B cell (primary cell): ENCODE measurements at regions of chr2 and their contacts with region 1.

Region 1: DNA sequence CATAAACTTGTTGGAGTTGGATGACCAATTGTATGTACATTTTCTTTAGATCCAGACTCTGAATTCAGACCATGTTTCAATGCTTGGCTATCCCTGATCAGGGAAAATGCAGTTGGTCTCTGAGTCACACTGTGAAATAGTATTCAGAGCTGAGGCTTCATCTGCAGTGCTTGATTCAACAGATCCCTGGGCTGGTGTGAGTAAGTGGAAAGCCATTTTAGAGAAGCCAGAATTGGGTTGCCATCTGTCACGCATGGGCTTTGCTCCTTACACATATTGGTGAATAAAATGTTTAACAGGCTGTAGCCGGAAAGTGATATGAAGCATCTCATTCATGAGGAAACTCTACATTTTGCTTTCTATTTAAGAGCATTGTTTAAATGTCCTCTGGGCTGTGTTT is 50.0 kb upstream of the ACYP2 start:
- DNase-seq: no peak
- ATAC-seq: no peak
- H3K4me3 ChIP-seq: no peak overlapping the region
- H3K4me3 Mint-ChIP-seq: no peak overlapping the region
- H3K27ac ChIP-seq: no peak overlapping the region
- H3K27ac Mint-ChIP-seq: no peak overlapping the region
- H3K4me1 ChIP-seq: peaks cover 3 to 4% of the 10 kb centered on the region in 2 donors
- H3K4me1 Mint-ChIP-seq: peaks cover 12% of the 10 kb centered on the region
- H3K27me3 ChIP-seq: no peaks in the 10 kb centered on the region
- H3K27me3 Mint-ChIP-seq: no peaks in the 10 kb centered on the region
- CTCF ChIP-seq: no peak

Region 2: GRCh38 chr2:53941749-53942148 is 123.7 kb before region 1 on chr2:
- CTCF ChIA-PET with region 1: no interaction called
- POLR2A ChIA-PET with region 1: no interaction called
- intact Hi-C with region 1: no loop called
- DNase-seq: peak; percentile 35
- ATAC-seq: peak; percentile 28
- H3K4me3 ChIP-seq: peak overlapping the region in 1 of 5 experiments; percentile 39
- H3K4me3 Mint-ChIP-seq: no peak overlapping the region
- H3K27ac ChIP-seq: peak overlapping the region; percentile 29 to 40
- H3K27ac Mint-ChIP-seq: peak overlapping the region; percentile 56
- H3K4me1 ChIP-seq: peaks cover 38 to 55% of the 10 kb centered on the region in 2 donors
- H3K4me1 Mint-ChIP-seq: peaks cover 48% of the 10 kb centered on the region
- H3K27me3 ChIP-seq: no peaks in the 10 kb centered on the region
- H3K27me3 Mint-ChIP-seq: no peaks in the 10 kb centered on the region
- CTCF ChIP-seq: no peak

Region 3: DNA sequence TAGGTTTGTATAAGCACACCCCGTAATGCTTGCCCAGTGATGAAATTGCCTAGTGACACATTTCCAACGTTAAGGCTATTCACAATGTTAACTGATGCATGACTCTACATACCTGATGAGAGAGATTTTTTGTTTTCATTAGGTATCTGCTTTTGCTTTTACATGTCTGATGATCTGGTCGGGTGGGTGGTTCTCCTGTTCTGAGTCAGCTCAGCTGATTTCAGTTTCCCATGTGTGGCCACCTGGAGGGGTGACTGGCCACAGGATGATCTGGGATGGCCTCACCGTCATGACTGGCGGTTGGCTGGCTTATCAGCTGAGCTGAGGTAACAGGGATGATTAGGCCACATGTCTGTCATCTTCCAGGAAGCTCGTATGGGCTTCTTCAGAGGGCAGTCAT is 16.2 kb after region 1 on chr2:
- CTCF ChIA-PET with region 1: interaction called, 4 read pairs
- POLR2A ChIA-PET with region 1: no interaction called
- intact Hi-C with region 1: loop called (anchors 2 kb)
- DNase-seq: no peak
- ATAC-seq: peak; percentile 21
- H3K4me3 ChIP-seq: no peak overlapping the region
- H3K4me3 Mint-ChIP-seq: no peak overlapping the region
- H3K27ac ChIP-seq: no peak overlapping the region
- H3K27ac Mint-ChIP-seq: no peak overlapping the region
- H3K4me1 ChIP-seq: peaks cover 3% of the 10 kb centered on the region in 2 donors
- H3K4me1 Mint-ChIP-seq: peaks cover 24% of the 10 kb centered on the region
- H3K27me3 ChIP-seq: no peaks in the 10 kb centered on the region
- H3K27me3 Mint-ChIP-seq: no peaks in the 10 kb centered on the region
- CTCF ChIP-seq: no peak

Region 4: GRCh38 chr2:54330162-54330925 is 264.9 kb after region 1 on chr2:
- CTCF ChIA-PET with region 1: no interaction called
- POLR2A ChIA-PET with region 1: no interaction called
- intact Hi-C with region 1: no loop called
- DNase-seq: peak; percentile 93
- ATAC-seq: peak; percentile 94
- H3K4me3 ChIP-seq: peak overlapping the region; percentile 51 to 67 (median 57)
- H3K4me3 Mint-ChIP-seq: peak overlapping the region; percentile 94
- H3K27ac ChIP-seq: peak overlapping the region in 1 of 2 donors; percentile 29
- H3K27ac Mint-ChIP-seq: peak overlapping the region; percentile 91
- H3K4me1 ChIP-seq: peaks cover 21 to 23% of the 10 kb centered on the region in 2 donors
- H3K4me1 Mint-ChIP-seq: peaks cover 18% of the 10 kb centered on the region
- H3K27me3 ChIP-seq: peaks cover 0 to 23% (median 10%) of the 10 kb centered on the region in 4 experiments
- H3K27me3 Mint-ChIP-seq: peaks cover 19% of the 10 kb centered on the region
- CTCF ChIP-seq: no peak